ENCODE measurements at regions of chr22 and their contacts with region 1.

Region 1: GRCh38 chr22:46116491-46116958 is 33.8 kb upstream of the PPARA start:
- DNase-seq: peak; percentile 79
- H3K4me3 ChIP-seq: no peak overlapping the region
- H3K27ac ChIP-seq: no peak overlapping the region
- H3K4me1 ChIP-seq: no peaks in the 10 kb centered on the region
- H3K27me3 ChIP-seq: no peaks in the 10 kb centered on the region
- CTCF ChIP-seq: peak; percentile 89

Region 2: DNA sequence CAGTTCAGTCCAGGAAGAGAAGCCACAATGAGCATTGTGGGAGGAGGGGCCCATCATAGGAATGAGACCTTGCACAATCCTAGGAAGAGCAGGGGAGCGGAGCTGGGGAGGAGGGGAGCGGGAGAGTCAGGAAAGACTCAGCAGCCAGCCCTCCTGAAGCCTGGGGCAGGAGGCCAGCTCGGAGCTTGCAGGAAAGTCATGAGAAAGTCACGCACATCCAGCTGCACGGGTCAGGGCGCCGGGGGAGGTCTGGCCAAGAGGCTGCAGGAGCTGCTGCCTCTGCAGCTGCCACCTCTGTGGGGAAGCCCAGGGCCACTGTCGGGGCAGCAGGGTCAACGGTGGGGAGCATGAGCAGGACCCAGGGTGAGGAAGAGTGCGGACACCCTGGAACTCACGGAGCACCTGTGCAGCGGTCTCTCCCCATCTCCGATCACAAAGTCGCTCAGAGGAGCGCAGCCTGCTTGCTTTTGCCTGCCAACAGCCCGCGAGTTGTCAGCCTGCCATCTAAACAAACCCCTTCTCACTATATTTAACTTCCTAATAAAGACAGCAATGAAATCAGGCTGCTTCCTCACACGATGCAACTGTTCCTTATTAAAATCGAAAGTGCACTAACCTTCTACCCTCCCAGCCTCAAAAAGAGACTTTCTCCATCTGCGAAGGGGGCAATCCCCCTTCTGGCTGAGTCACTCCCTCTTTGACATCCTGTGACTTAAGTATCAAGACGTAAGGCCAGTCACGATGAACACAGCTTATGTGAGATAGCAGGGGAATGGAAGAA is 1565.6 kb before region 1 on chr22:
- CTCF ChIA-PET with region 1: no interaction called
- POLR2A ChIA-PET with region 1: no interaction called
- intact Hi-C with region 1: no loop called
- DNase-seq: no peak
- H3K4me3 ChIP-seq: no peak overlapping the region
- H3K27ac ChIP-seq: no peak overlapping the region
- H3K4me1 ChIP-seq: no peaks in the 10 kb centered on the region
- H3K27me3 ChIP-seq: no peaks in the 10 kb centered on the region
- CTCF ChIP-seq: no peak

Region 3: DNA sequence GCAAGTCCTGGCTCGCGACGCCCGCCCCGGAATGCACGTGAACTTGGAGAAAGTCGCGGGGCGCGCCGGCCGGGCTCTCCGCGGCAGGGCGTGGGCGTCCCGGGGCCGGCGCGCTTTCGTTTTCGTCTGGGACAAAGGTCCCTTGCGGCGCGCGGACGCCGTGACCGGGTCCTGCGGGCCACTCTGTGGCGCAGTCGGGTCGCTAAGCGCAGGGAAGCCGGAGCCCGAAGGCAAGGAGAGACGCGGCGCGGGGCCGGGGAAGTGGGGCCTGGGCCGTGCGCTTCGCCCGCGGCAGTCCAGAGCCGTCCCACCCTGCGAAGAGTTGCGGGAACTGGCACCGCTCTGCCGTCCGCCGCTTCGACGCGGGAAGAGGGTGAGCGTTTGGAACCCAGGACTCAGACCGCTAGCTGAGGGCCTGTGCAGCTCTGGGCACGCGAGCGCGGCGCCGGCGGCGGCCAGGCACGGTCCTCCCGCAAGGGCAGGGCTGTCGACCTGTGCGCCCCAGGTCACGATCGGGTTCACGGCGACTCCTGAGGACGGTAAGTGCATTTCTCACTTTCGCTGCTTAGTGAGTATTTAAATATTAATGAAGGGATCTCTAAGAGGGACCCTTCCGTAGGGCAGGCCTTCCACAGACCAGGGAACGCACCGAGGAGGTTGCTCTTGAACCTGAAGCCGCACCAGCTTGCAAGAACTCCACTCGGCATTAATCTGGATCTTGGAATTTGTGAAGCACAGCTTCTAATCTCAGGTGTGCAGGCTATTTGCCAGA is 44.2 kb before region 1 on chr22:
- CTCF ChIA-PET with region 1: no interaction called
- POLR2A ChIA-PET with region 1: interaction called, 25 read pairs
- intact Hi-C with region 1: no loop called
- DNase-seq: peak; percentile 79
- H3K4me3 ChIP-seq: peak overlapping the region; percentile 85
- H3K27ac ChIP-seq: peak overlapping the region; percentile 98
- H3K4me1 ChIP-seq: peaks cover 31% of the 10 kb centered on the region
- H3K27me3 ChIP-seq: no peaks in the 10 kb centered on the region
- CTCF ChIP-seq: no peak

Region 4: DNA sequence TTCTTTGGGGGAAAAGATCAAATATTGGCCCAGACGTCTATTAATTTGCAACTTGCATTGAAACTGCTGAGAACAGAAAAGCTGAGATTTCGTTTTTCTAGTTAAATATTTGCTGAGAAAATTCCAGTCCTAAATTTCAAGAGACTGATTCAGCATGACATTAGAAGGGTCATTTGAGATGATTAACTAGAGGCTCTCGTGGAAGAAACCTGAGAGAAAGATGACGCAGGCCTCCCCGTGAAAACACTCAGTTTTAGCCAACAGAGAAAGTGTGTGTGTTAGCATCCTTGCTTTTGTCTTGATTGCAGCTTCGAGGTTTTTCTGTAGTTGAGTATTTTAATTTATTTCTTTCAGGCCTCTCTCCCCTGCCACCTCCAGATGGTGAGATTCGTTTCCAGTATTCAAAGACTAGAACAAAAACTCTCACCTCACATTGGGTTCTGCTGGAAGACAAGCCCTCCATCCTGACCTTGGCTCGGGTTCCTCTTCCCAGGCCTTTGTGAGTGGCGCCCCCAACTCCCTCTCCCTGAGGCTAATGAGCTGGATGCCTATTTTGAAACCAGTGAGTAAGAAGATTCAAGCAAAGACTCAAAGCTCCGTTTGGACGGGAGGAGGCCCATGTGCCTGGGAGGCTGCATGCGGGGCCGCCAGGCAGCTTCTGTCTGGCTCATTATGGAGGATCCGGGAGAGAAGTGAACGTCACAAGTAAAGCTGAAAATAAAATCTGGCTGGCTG is 368.5 kb after region 1 on chr22:
- CTCF ChIA-PET with region 1: no interaction called
- POLR2A ChIA-PET with region 1: no interaction called
- intact Hi-C with region 1: no loop called
- DNase-seq: no peak
- H3K4me3 ChIP-seq: no peak overlapping the region
- H3K27ac ChIP-seq: no peak overlapping the region
- H3K4me1 ChIP-seq: peaks cover 5% of the 10 kb centered on the region
- H3K27me3 ChIP-seq: no peaks in the 10 kb centered on the region
- CTCF ChIP-seq: no peak

Measured in A673 (cell line).